Right cardiac atrium (tissue), 5 donors: ENCODE measurements at regions of chr6 and their contacts with region 1.

Region 1: GRCh38 chr6:36094753-36095496 is 35.4 kb upstream of the MAPK13 start:
- DNase-seq: peak; percentile 79 to 95 (median 91)
- ATAC-seq: peak; percentile 92 to 94
- H3K4me3 ChIP-seq: no peak overlapping the region
- H3K27ac ChIP-seq: no peak overlapping the region
- H3K4me1 ChIP-seq: no peaks in the 10 kb centered on the region
- H3K27me3 ChIP-seq: no peaks in the 10 kb centered on the region

Region 2: GRCh38 chr6:36027501-36028087 is 67.3 kb before region 1 on chr6 and contains the start of gene MAPK14:
- intact Hi-C with region 1: loop called (anchors 2 kb)
- DNase-seq: peak; percentile 99 to 100 (median 99)
- ATAC-seq: peak; percentile 96
- H3K4me3 ChIP-seq: peak within 1 kb of the TSS; percentile 86
- H3K27ac ChIP-seq: peak within 1 kb of the TSS; percentile 74
- H3K4me1 ChIP-seq: peaks cover 2% of the 10 kb centered on the region
- H3K27me3 ChIP-seq: no peaks in the 10 kb centered on the region
- total RNA-seq, gene MAPK14: 27.8 to 37.0 (median 33.7) TPM

Region 3: DNA sequence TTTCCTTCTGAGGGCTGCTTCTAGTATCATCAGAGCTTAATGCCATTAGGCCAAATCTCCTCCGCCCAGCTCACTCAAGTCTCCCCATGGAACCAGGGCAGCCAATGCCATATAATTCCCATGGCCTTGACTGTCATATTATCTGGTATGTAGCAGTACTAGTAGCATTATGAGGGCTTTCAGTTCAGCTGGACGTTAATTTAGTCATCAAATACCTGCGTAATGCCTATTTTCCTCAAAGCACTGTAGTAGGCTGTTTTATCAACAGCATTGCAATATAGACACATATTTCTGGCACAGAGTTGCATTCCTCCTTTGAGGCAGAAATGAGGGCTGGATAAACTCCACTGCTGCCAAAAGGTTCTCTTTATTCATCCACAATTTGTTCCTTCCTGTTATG is 349.5 kb after region 1 on chr6:
- intact Hi-C with region 1: no loop called
- DNase-seq: no peak
- ATAC-seq: no peak
- H3K4me3 ChIP-seq: peak overlapping the region; percentile 61
- H3K27ac ChIP-seq: peak overlapping the region; percentile 75
- H3K4me1 ChIP-seq: peaks cover 6% of the 10 kb centered on the region
- H3K27me3 ChIP-seq: no peaks in the 10 kb centered on the region